ENCODE measurements at regions of chr13 and their contacts with region 1.

Region 1: DNA sequence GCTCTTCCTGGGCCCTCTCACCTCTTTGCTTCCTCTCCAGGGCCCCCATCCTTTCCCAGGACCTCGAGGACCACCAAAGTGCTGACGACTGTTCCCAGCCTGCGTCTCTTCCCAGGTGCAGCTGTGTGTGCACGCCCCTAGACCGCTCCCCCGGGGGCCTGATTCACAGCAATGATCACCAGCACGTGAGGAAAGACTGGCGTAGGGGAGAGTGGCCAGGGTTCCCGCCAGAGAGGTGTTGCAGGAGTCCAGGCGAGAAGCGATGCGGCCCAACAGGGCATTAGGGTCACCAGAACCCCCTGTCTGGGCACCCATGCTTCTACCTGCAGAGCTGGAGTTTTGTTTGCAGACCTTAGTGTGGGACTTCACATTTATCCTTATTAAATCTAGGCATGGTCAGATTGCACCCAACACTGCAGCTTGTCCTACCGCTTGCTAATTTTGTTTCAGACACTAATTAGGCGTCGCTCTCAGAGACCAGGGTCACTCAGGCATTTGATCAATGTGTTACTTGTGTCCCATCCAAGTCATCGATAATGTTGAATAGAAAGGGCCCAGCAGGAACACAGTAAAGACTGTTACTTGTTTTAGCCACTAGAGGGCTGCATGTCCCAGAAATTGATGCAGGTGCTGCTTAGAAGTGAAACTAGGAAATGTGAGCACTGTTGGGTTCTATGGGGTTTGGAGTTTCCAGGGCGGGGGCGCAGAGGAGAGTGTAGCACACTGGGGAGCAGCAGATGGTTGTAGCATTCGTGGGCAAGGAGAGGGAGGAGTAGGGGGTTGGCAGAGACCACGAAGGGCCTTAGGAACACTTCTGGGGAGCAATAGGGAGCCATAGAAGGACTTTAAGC is 53.2 kb downstream of the CDADC1 start:
- DNase-seq: peak; percentile 61
- H3K4me3 Mint-ChIP-seq: peak overlapping the region; percentile 10
- H3K27ac Mint-ChIP-seq: peak overlapping the region; percentile 65
- H3K4me1 Mint-ChIP-seq: peaks cover 14% of the 10 kb centered on the region
- H3K27me3 Mint-ChIP-seq: no peaks in the 10 kb centered on the region

Region 2: DNA sequence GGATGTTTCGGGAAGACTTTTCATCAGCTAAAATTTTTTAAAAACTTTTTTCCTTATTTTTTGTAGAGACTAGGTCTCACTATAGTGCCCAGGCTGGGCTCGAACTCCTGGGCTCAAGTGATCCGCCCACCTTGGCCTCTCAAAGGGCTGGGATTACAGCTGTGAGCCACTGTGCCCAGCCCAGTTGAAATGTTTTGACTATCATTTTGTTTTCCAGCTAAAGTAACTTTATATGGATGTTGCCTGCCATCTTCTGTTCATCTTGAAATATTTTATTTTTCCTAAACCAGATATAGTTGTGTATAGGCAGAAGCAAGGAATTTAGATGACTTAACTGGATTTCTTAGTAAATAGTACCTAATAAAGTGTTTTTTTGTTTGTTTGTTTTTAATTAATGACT is 135.9 kb after region 1 on chr13:
- intact Hi-C with region 1: loop called (anchors 2 kb)
- DNase-seq: no peak
- H3K4me3 Mint-ChIP-seq: no peak overlapping the region
- H3K27ac Mint-ChIP-seq: no peak overlapping the region
- H3K4me1 Mint-ChIP-seq: peaks cover 12% of the 10 kb centered on the region
- H3K27me3 Mint-ChIP-seq: peaks cover 3% of the 10 kb centered on the region

Measured in activated T-helper 1 cell treated with anti-CD3 and anti-CD28 coated beads, Interleukin-12 subunit alpha, Interleukin-12 subunit beta, Interleukin-2, Interleukin-4 antibody, amounts not matched to agents 30 ng/mL and 10 ng/mL and 1 ng/mL, durations not matched to agents 14 hours and 24 hours and 36 hours (primary cell).